B cell (primary cell): ENCODE measurements at regions of chr6 and their contacts with region 1.

Region 1: DNA sequence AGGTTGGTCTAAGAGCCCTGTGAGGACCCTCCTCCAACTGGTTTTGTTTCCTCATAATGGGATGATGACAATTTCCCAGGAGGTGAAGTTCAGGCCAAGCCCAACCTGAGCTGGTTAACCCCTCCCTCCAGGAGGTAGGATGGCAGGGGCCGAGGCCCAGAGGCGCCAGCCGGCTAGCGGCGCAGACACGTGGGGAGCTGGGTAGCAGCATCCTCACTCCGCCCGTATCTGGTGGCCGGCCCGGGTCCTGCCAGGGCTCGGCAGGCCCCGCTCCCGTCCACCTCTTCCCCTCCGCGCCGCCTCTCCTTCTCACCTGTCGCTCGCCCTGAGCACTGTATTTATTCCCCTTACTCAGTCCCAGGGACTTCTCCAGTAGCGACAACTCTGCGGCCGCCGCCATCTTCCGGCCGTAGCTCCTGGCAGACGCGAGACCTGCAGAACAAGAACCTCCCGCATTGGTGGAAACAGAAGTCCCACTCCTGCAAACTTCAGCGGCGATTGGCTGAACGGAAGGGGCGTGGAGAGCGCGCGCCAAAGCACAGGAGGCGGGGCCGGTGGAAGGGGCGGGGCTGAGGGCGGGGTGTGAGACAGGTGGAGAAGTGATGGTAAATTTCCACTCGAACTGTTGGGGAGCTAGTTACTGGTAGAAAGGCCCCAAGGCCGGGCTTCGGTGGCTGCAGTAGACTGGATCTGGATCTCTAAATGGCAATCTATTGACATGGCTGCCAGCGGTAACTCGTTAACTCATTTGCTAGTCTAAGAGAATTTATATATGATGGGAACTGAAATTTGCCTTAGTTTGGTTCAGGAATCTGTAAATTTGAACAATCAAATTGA is at the start of gene EEF1E1:
- DNase-seq: peak; percentile 95
- ATAC-seq: peak; percentile 98
- H3K4me3 ChIP-seq: peak within 1 kb of the TSS; percentile 61 to 89 (median 86)
- H3K4me3 Mint-ChIP-seq: peak within 1 kb of the TSS; percentile 96
- H3K27ac ChIP-seq: peak within 1 kb of the TSS; percentile 50 to 76
- H3K27ac Mint-ChIP-seq: peak within 1 kb of the TSS; percentile 97
- H3K4me1 ChIP-seq: peaks cover 12% of the 10 kb centered on the region in 2 donors
- H3K4me1 Mint-ChIP-seq: peaks cover 21% of the 10 kb centered on the region
- H3K27me3 ChIP-seq: peaks cover 0 to 6% (median 2%) of the 10 kb centered on the region in 4 experiments
- H3K27me3 Mint-ChIP-seq: peaks cover 22% of the 10 kb centered on the region
- CTCF ChIP-seq: no peak
- total RNA-seq, gene EEF1E1: 20.1 and 23.1 TPM in 2 replicates

Region 2: GRCh38 chr6:8435160-8435852 is 333.0 kb after region 1 on chr6 and contains the start of gene SLC35B3:
- CTCF ChIA-PET with region 1: no interaction called
- POLR2A ChIA-PET with region 1: no interaction called
- intact Hi-C with region 1: loop called (anchors 10 kb)
- DNase-seq: peak; percentile 97
- ATAC-seq: peak; percentile 90
- H3K4me3 ChIP-seq: peak within 1 kb of the TSS; percentile 75 to 100 (median 96)
- H3K4me3 Mint-ChIP-seq: peak within 1 kb of the TSS; percentile 96
- H3K27ac ChIP-seq: peak within 1 kb of the TSS; percentile 68 to 88
- H3K27ac Mint-ChIP-seq: peak within 1 kb of the TSS; percentile 98
- H3K4me1 ChIP-seq: peaks cover 12 to 19% of the 10 kb centered on the region in 2 donors
- H3K4me1 Mint-ChIP-seq: peaks cover 41% of the 10 kb centered on the region
- H3K27me3 ChIP-seq: no peaks in the 10 kb centered on the region
- H3K27me3 Mint-ChIP-seq: no peaks in the 10 kb centered on the region
- CTCF ChIP-seq: no peak
- total RNA-seq, gene SLC35B3: 14.6 and 17.1 TPM in 2 replicates

Region 3: DNA sequence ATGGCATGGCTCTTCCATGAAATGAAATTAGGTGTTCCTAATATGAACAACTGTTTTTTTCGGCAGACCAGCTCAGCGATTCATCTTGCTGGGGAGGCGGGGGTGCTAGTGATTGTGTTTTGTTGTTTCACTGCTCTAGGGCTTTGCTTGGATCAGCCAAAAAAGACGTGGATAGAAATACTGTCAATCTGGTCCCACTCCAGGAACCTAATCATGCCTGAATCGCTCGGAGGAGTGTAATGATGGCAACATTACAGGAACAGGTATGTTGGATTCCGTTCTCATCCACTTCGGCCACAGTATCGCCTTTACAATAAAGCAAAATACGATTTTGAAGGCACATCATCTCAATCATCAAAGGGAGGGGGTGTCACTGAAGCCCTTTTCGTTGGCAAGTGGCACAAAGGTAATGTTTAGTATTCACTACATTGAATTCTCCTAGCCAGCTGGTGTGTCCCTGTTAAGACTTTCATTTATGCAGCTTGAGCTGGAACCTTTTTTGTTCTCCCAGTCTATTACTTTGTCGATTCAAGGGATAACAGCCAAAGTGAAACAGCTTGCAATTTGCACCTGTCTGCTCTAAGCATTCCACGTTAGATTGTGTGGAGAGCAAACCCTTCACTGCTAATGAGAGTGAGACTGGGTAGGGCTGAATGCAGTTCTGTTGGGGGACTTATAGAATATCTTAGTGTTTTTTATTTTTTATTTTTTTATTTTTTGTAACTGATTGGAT is 1834.9 kb after region 1 on chr6:
- CTCF ChIA-PET with region 1: no interaction called
- POLR2A ChIA-PET with region 1: no interaction called
- intact Hi-C with region 1: no loop called
- DNase-seq: no peak
- ATAC-seq: no peak
- H3K4me3 ChIP-seq: no peak overlapping the region
- H3K4me3 Mint-ChIP-seq: no peak overlapping the region
- H3K27ac ChIP-seq: no peak overlapping the region
- H3K27ac Mint-ChIP-seq: no peak overlapping the region
- H3K4me1 ChIP-seq: no peaks in the 10 kb centered on the region
- H3K4me1 Mint-ChIP-seq: no peaks in the 10 kb centered on the region
- H3K27me3 ChIP-seq: no peaks in the 10 kb centered on the region
- H3K27me3 Mint-ChIP-seq: no peaks in the 10 kb centered on the region
- CTCF ChIP-seq: no peak